IMR-90 (cell line): ENCODE measurements at regions of chr19 and their contacts with region 1.

Region 1: GRCh38 chr19:18529782-18530181 is 7.9 kb upstream of the ELL start:
- DNase-seq: no peak
- ATAC-seq: peak; percentile 72
- H3K4me3 ChIP-seq: no peak overlapping the region
- H3K27ac ChIP-seq: no peak overlapping the region
- H3K4me1 ChIP-seq: no peaks in the 10 kb centered on the region
- H3K27me3 ChIP-seq: no peaks in the 10 kb centered on the region
- CTCF ChIP-seq: no peak
- POLR2A ChIP-seq: no peak
- RAD21 ChIP-seq: no peak

Region 2: GRCh38 chr19:18481505-18482222 is 48.1 kb before region 1 on chr19:
- CTCF ChIA-PET with region 1: no interaction called
- POLR2A ChIA-PET with region 1: interaction called, 10 read pairs
- dilution Hi-C with region 1: no loop called
- in situ Hi-C with region 1: no loop called
- intact Hi-C with region 1: no loop called
- DNase-seq: no peak
- ATAC-seq: no peak
- H3K4me3 ChIP-seq: no peak overlapping the region
- H3K27ac ChIP-seq: no peak overlapping the region
- H3K4me1 ChIP-seq: peaks cover 47% of the 10 kb centered on the region
- H3K27me3 ChIP-seq: no peaks in the 10 kb centered on the region
- CTCF ChIP-seq: no peak
- POLR2A ChIP-seq: no peak
- RAD21 ChIP-seq: no peak

Region 3: GRCh38 chr19:18515959-18516358 is 13.8 kb before region 1 on chr19:
- CTCF ChIA-PET with region 1: no interaction called
- POLR2A ChIA-PET with region 1: interaction called, 11 read pairs
- dilution Hi-C with region 1: no loop called
- in situ Hi-C with region 1: no loop called
- intact Hi-C with region 1: no loop called
- DNase-seq: no peak
- ATAC-seq: no peak
- H3K4me3 ChIP-seq: no peak overlapping the region
- H3K27ac ChIP-seq: no peak overlapping the region
- H3K4me1 ChIP-seq: peaks cover 19% of the 10 kb centered on the region
- H3K27me3 ChIP-seq: no peaks in the 10 kb centered on the region
- CTCF ChIP-seq: no peak
- POLR2A ChIP-seq: no peak
- RAD21 ChIP-seq: no peak

Region 4: DNA sequence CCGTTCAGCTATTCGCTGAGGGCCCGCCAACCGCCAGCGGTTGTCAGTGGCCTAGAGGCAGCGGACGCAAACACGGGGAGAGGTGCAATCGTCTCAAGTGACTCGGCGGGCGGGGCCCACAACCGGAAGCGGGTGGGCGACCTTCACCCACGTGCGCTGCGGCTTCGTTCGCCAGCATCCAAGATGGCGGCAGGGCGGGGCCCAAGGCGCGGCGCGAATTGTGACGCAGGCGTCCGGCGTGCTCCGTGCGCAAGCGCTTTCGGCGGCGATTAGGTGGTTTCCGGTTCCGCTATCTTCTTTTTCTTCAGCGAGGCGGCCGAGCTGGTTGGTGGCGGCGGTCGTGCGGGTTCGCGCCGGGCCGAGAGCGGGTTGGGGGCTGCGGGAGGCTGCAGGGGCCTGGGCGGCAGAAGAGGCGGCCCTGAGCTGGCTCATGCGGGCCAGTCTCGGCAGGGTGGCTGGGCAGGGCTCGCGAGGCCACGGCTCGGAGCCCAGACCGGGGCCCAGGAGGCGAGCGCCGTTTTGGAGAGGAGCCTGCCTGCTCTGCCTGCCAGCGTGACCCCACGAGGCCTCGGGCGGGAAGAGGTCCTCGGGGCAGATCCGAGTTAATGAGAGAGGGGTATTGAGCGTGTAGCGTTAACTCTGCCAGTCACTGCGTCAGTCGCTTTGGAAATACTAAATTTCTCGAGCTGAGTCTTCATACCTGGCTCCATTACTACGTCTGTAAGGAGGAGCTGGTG is 42.0 kb after region 1 on chr19 and contains the start of gene UBA52:
- CTCF ChIA-PET with region 1: no interaction called
- POLR2A ChIA-PET with region 1: no interaction called
- dilution Hi-C with region 1: no loop called
- in situ Hi-C with region 1: no loop called
- intact Hi-C with region 1: no loop called
- DNase-seq: peak; percentile 96
- ATAC-seq: peak; percentile 97
- H3K4me3 ChIP-seq: peak within 1 kb of the TSS; percentile 85
- H3K27ac ChIP-seq: peak within 1 kb of the TSS; percentile 65
- H3K4me1 ChIP-seq: peaks cover 10% of the 10 kb centered on the region
- H3K27me3 ChIP-seq: no peaks in the 10 kb centered on the region
- CTCF ChIP-seq: no peak
- POLR2A ChIP-seq: peak; percentile 96
- RAD21 ChIP-seq: no peak
- total RNA-seq, gene UBA52: 1,030 and 1,144 TPM in 2 replicates

Region 5: GRCh38 chr19:18700501-18701249 is 170.9 kb after region 1 on chr19:
- CTCF ChIA-PET with region 1: no interaction called
- POLR2A ChIA-PET with region 1: no interaction called
- dilution Hi-C with region 1: no loop called
- in situ Hi-C with region 1: no loop called
- intact Hi-C with region 1: no loop called
- DNase-seq: peak; percentile 29
- ATAC-seq: peak; percentile 99
- H3K4me3 ChIP-seq: peak overlapping the region; percentile 15
- H3K27ac ChIP-seq: no peak overlapping the region; the same call in 1 of the 2 replicates
- H3K4me1 ChIP-seq: peaks cover 9% of the 10 kb centered on the region; the same call in 1 of the 2 replicates
- H3K27me3 ChIP-seq: no peaks in the 10 kb centered on the region
- CTCF ChIP-seq: no peak
- POLR2A ChIP-seq: no peak
- RAD21 ChIP-seq: no peak

Region 6: GRCh38 chr19:18725841-18726770 is 196.3 kb after region 1 on chr19:
- CTCF ChIA-PET with region 1: no interaction called
- POLR2A ChIA-PET with region 1: no interaction called
- dilution Hi-C with region 1: no loop called
- in situ Hi-C with region 1: no loop called
- intact Hi-C with region 1: no loop called
- DNase-seq: no peak
- ATAC-seq: no peak
- H3K4me3 ChIP-seq: no peak overlapping the region
- H3K27ac ChIP-seq: no peak overlapping the region
- H3K4me1 ChIP-seq: no peaks in the 10 kb centered on the region
- H3K27me3 ChIP-seq: no peaks in the 10 kb centered on the region
- CTCF ChIP-seq: no peak
- POLR2A ChIP-seq: no peak
- RAD21 ChIP-seq: no peak